B cell (primary cell): ENCODE measurements at regions of chr18 and their contacts with region 1.

Region 1: GRCh38 chr18:12883684-12884405 is at the start of gene PTPN2:
- DNase-seq: peak; percentile 97
- ATAC-seq: peak; percentile 76
- H3K4me3 ChIP-seq: peak within 1 kb of the TSS; percentile 66 to 92 (median 78)
- H3K4me3 Mint-ChIP-seq: peak within 1 kb of the TSS; percentile 89
- H3K27ac ChIP-seq: peak within 1 kb of the TSS; percentile 99
- H3K27ac Mint-ChIP-seq: peak within 1 kb of the TSS; percentile 95
- H3K4me1 ChIP-seq: peaks cover 64 to 71% of the 10 kb centered on the region in 2 donors
- H3K4me1 Mint-ChIP-seq: peaks cover 71% of the 10 kb centered on the region
- H3K27me3 ChIP-seq: no peaks in the 10 kb centered on the region
- H3K27me3 Mint-ChIP-seq: no peaks in the 10 kb centered on the region
- CTCF ChIP-seq: no peak
- total RNA-seq, gene PTPN2: 64.8 and 75.5 TPM in 2 replicates

Region 2: DNA sequence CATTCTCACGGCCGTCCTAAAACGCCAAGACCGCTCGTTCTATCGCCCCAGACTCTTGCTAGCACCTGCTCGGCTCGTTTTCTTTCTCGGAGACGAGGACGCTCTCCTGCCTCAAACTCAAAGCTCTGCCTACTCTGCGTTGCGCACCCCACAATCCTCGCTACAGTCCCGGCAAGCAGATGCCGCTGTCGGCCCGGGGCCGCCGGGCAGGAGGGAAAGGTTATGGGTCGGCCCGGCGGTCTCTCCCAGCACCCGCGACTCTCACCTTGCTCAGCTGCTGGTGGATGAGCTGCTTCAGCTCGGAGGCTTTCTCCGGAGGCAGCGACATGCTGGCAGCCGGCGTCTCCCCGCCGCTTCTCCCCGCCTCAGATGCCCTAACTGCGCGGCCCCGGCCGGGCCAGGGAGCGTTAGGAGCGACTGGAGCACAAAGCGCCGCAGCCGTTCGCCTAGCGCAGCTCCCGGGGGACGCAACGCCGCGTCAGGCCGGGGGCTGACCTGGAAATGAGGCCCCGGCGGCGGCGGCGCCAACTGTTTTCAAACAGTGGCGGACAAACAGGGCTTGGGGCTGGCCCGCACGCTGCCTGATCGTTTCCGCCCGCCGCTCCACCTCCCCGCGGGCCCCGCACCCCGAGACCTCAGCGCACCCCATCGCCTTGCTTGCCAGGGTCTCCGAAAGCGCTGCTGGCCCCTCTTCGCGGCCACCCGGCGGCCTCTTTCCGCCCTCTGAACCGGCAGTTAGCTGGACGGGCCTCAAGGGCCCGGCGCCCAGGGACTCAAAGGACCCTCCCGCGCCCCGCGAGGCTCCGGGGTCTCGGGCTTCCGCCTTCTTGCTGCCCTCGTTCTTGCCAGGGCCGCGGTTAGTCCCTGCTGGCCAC is 181.4 kb before region 1 on chr18 and contains the starts of genes CEP76 and PSMG2:
- CTCF ChIA-PET with region 1: interaction called, 3 read pairs
- POLR2A ChIA-PET with region 1: interaction called, 7 read pairs
- intact Hi-C with region 1: loop called (anchors 1 kb)
- DNase-seq: peak; percentile 96
- ATAC-seq: peak; percentile 85
- H3K4me3 ChIP-seq: peak within 1 kb of the TSS; percentile 84 to 95 (median 86)
- H3K4me3 Mint-ChIP-seq: peak within 1 kb of the TSS; percentile 99
- H3K27ac ChIP-seq: peak within 1 kb of the TSS; percentile 96 to 100
- H3K27ac Mint-ChIP-seq: peak within 1 kb of the TSS; percentile 100
- H3K4me1 ChIP-seq: peaks cover 22 to 26% of the 10 kb centered on the region in 2 donors
- H3K4me1 Mint-ChIP-seq: peaks cover 37% of the 10 kb centered on the region
- H3K27me3 ChIP-seq: no peaks in the 10 kb centered on the region
- H3K27me3 Mint-ChIP-seq: no peaks in the 10 kb centered on the region
- CTCF ChIP-seq: no peak
- total RNA-seq, gene CEP76: 10.0 and 12.6 TPM in 2 replicates
- total RNA-seq, gene PSMG2: 61.2 and 64.1 TPM in 2 replicates

Region 3: DNA sequence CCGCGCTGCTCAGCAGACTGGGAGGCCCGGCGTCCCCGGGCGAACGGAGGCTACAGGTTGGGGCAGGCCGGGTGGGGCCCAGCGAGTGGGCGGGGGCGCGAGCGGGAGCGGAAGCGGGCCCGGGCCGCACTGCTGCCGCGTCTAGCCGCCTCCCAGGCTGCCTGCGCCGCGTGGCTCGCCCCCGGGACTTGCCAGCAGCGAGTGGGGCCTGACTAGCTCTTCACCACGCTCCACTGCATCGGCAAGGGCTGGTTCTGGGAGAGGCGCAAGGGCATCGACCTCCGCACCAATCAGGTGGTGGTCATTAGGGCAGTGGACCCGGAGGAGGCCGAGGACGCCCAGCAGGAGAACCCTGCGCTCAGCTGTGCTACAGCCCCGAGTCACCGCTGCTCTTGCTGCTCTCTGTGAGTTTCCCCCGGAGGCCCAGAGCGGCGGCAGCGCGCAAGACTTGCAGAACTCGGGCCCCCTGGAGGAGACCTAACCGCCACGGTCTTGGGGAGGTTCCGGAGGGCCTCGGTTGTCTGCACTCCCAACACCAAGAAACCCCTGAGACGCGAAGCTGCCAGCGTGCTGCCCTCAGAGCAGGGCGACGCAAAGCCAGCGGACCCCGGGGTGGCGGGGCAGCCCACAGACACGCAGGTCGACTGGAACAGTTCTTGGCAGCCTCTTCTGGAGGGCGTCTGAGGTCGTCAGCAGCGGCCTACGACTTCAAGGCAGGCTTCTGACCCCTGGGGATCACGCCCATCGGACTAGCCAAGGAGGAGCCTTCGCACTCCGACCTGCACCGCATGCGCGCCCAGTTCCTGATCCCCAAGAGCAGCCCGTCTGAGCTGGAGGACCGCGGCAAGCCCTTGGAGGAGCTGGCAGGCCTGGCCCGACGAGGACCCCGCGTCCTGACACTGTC is 27.4 kb after region 1 on chr18:
- CTCF ChIA-PET with region 1: no interaction called
- POLR2A ChIA-PET with region 1: interaction called, 3 read pairs
- intact Hi-C with region 1: loop called (anchors 2 kb)
- DNase-seq: peak; percentile 68
- ATAC-seq: peak; percentile 87
- H3K4me3 ChIP-seq: peak overlapping the region in 4 of 5 experiments; percentile 43 to 67 (median 54)
- H3K4me3 Mint-ChIP-seq: peak overlapping the region; percentile 84
- H3K27ac ChIP-seq: no peak overlapping the region
- H3K27ac Mint-ChIP-seq: no peak overlapping the region
- H3K4me1 ChIP-seq: peaks cover 0 to 13% of the 10 kb centered on the region in 2 donors
- H3K4me1 Mint-ChIP-seq: peaks cover 8% of the 10 kb centered on the region
- H3K27me3 ChIP-seq: peaks cover 0 to 14% (median 2%) of the 10 kb centered on the region in 4 experiments
- H3K27me3 Mint-ChIP-seq: peaks cover 12% of the 10 kb centered on the region
- CTCF ChIP-seq: no peak

Region 4: DNA sequence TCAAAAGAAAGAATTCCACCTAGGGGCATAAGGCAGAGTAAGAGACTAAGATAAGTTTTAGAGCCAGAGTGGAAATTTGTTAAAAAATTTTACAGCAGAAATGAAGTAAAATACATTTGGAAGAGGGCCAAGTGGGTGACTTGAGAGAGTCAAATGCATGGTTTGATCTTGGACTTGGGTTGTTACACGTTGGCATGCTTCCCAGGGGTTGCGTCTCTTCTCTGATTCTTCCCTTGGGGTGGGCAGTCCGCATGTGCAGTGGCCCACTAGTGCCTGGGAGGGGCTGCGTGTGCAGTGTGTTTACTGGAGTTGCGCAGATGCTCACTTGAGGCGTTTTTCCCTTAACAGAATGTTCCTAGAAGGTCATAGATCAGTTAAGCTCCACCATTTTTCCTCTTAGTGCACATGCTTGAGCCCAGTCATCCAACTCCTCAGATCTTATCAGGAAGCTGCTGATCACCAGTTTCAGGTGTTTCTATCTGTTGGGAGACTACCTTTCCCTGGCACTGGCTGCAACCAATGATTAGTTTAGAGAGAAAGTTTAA is 77.1 kb after region 1 on chr18:
- CTCF ChIA-PET with region 1: no interaction called
- POLR2A ChIA-PET with region 1: no interaction called
- intact Hi-C with region 1: no loop called
- DNase-seq: no peak
- ATAC-seq: no peak
- H3K4me3 ChIP-seq: no peak overlapping the region
- H3K4me3 Mint-ChIP-seq: no peak overlapping the region
- H3K27ac ChIP-seq: no peak overlapping the region
- H3K27ac Mint-ChIP-seq: no peak overlapping the region
- H3K4me1 ChIP-seq: no peaks in the 10 kb centered on the region
- H3K4me1 Mint-ChIP-seq: no peaks in the 10 kb centered on the region
- H3K27me3 ChIP-seq: no peaks in the 10 kb centered on the region
- H3K27me3 Mint-ChIP-seq: no peaks in the 10 kb centered on the region
- CTCF ChIP-seq: no peak

Region 5: GRCh38 chr18:13137670-13138419 is 254.0 kb after region 1 on chr18:
- CTCF ChIA-PET with region 1: no interaction called
- POLR2A ChIA-PET with region 1: interaction called, 4 read pairs
- intact Hi-C with region 1: loop called (anchors 1 kb)
- DNase-seq: peak; percentile 85
- ATAC-seq: peak; percentile 90
- H3K4me3 ChIP-seq: peak overlapping the region; percentile 58 to 98 (median 84)
- H3K4me3 Mint-ChIP-seq: peak overlapping the region; percentile 100
- H3K27ac ChIP-seq: peak overlapping the region; percentile 65 to 86
- H3K27ac Mint-ChIP-seq: peak overlapping the region; percentile 99
- H3K4me1 ChIP-seq: peaks cover 6 to 11% of the 10 kb centered on the region in 2 donors
- H3K4me1 Mint-ChIP-seq: peaks cover 24% of the 10 kb centered on the region
- H3K27me3 ChIP-seq: no peaks in the 10 kb centered on the region
- H3K27me3 Mint-ChIP-seq: no peaks in the 10 kb centered on the region
- CTCF ChIP-seq: no peak